ENCODE measurements at regions of chr14 and their contacts with region 1.

Region 1: GRCh38 chr14:88013750-88014349 is 8.9 kb downstream of the GPR65 start:
- DNase-seq: peak; percentile 58
- ATAC-seq: peak; percentile 94
- H3K4me3 ChIP-seq: no peak overlapping the region
- H3K27ac ChIP-seq: no peak overlapping the region
- H3K4me1 ChIP-seq: no peaks in the 10 kb centered on the region
- H3K27me3 ChIP-seq: no peaks in the 10 kb centered on the region; the same call in 1 of the 2 replicates
- CTCF ChIP-seq: peak; percentile 87
- POLR2A ChIP-seq: no peak
- RAD21 ChIP-seq: peak; percentile 78

Region 2: GRCh38 chr14:88168498-88169165 is 154.8 kb after region 1 on chr14:
- CTCF ChIA-PET with region 1: interaction called, 7 read pairs
- POLR2A ChIA-PET with region 1: no interaction called
- dilution Hi-C with region 1: no loop called
- in situ Hi-C with region 1: no loop called
- intact Hi-C with region 1: loop called (anchors 2 kb)
- DNase-seq: peak; percentile 16
- ATAC-seq: peak; percentile 84
- H3K4me3 ChIP-seq: no peak overlapping the region
- H3K27ac ChIP-seq: no peak overlapping the region
- H3K4me1 ChIP-seq: no peaks in the 10 kb centered on the region
- H3K27me3 ChIP-seq: no peaks in the 10 kb centered on the region
- CTCF ChIP-seq: peak; percentile 54
- POLR2A ChIP-seq: no peak
- RAD21 ChIP-seq: peak; percentile 50

Region 3: DNA sequence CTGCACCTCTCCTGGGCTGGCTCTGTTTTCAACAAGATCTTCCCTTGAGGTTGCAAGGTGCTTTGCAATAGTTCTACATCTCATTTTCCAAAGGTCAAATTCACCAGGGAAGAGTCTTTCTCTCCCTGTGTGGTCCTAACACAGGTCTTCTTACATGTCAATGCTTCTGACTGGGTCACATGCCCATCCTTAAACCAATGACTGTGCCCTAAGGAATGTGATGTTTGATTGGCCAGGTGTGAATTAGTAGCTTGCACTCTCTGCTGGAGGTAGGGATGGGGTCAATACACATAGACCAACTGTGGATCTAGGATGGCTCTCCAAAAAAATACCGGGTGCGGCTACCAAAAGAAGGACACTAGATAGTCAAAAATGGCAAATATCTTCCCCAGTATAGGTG is 329.1 kb after region 1 on chr14:
- CTCF ChIA-PET with region 1: no interaction called
- POLR2A ChIA-PET with region 1: no interaction called
- dilution Hi-C with region 1: no loop called
- in situ Hi-C with region 1: no loop called
- intact Hi-C with region 1: no loop called
- DNase-seq: no peak
- ATAC-seq: no peak
- H3K4me3 ChIP-seq: no peak overlapping the region
- H3K27ac ChIP-seq: no peak overlapping the region
- H3K4me1 ChIP-seq: no peaks in the 10 kb centered on the region
- H3K27me3 ChIP-seq: no peaks in the 10 kb centered on the region; the same call in 1 of the 2 replicates
- CTCF ChIP-seq: no peak
- POLR2A ChIP-seq: no peak
- RAD21 ChIP-seq: no peak

Region 4: GRCh38 chr14:88385345-88386101 is 371.7 kb after region 1 on chr14 and contains the start of gene SPATA7:
- CTCF ChIA-PET with region 1: interaction called, 3 read pairs
- POLR2A ChIA-PET with region 1: no interaction called
- dilution Hi-C with region 1: no loop called
- in situ Hi-C with region 1: no loop called
- intact Hi-C with region 1: loop called (anchors 5 kb)
- DNase-seq: peak; percentile 89
- ATAC-seq: peak; percentile 98
- H3K4me3 ChIP-seq: peak within 1 kb of the TSS; percentile 82
- H3K27ac ChIP-seq: peak within 1 kb of the TSS; percentile 95
- H3K4me1 ChIP-seq: no peaks in the 10 kb centered on the region; the same call in 1 of the 2 replicates
- H3K27me3 ChIP-seq: no peaks in the 10 kb centered on the region
- CTCF ChIP-seq: no peak
- POLR2A ChIP-seq: peak; percentile 51
- RAD21 ChIP-seq: no peak
- total RNA-seq, gene SPATA7: 10.0 and 12.8 TPM in 2 replicates

Region 5: GRCh38 chr14:88551094-88551870 is 537.4 kb after region 1 on chr14:
- CTCF ChIA-PET with region 1: no interaction called
- POLR2A ChIA-PET with region 1: no interaction called
- dilution Hi-C with region 1: no loop called
- in situ Hi-C with region 1: no loop called
- intact Hi-C with region 1: loop called (anchors 2 kb)
- DNase-seq: peak; percentile 82
- ATAC-seq: peak; percentile 68
- H3K4me3 ChIP-seq: peak overlapping the region; percentile 71
- H3K27ac ChIP-seq: peak overlapping the region; percentile 65
- H3K4me1 ChIP-seq: peaks cover 4% of the 10 kb centered on the region; the same call in 1 of the 2 replicates
- H3K27me3 ChIP-seq: no peaks in the 10 kb centered on the region
- CTCF ChIP-seq: peak; percentile 40
- POLR2A ChIP-seq: no peak
- RAD21 ChIP-seq: peak; percentile 39

Measured in IMR-90 (cell line).